Calu3 (cell line): ENCODE measurements at regions of chr1 and their contacts with region 1.

Region 1: GRCh38 chr1:93615582-93616150 is 66.0 kb downstream of the BCAR3 start:
- DNase-seq: peak; percentile 54
- H3K4me3 Mint-ChIP-seq: no peak overlapping the region
- H3K27ac Mint-ChIP-seq: peak overlapping the region; percentile 99
- H3K4me1 Mint-ChIP-seq: peaks cover 80% of the 10 kb centered on the region
- H3K27me3 Mint-ChIP-seq: no peaks in the 10 kb centered on the region
- CTCF ChIP-seq: no peak

Region 2: DNA sequence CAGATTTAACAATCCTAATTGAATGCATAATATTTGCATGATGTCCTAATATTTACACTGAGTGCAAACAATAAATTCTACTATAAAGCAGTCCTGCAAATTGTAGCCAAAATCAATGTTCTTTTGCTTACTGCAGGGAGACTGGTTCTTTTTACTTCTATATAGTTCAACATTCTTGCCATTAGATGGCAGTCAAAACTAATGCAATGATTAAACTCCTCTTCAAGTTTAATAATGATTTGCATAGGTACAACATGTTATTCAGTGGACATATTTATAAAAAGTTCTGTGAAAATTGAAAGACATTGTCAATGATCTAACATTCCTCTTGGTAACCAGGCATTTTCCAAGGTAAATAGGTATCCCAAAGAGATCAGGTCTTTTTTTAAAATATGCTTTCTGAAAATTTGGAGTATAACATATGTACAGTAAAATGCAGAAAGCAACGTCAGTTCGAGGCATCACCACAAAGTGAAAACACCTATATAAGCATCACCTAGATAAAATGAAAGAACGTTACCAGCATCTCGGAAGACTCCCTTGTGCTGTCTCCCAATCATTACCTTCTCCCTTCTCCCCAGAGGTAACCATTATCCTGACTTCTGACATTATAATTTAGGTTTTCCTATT is 177.6 kb before region 1 on chr1:
- CTCF ChIA-PET with region 1: no interaction called
- intact Hi-C with region 1: loop called (anchors 2 kb)
- DNase-seq: no peak
- H3K4me3 Mint-ChIP-seq: no peak overlapping the region
- H3K27ac Mint-ChIP-seq: no peak overlapping the region
- H3K4me1 Mint-ChIP-seq: peaks cover 14% of the 10 kb centered on the region
- H3K27me3 Mint-ChIP-seq: no peaks in the 10 kb centered on the region
- CTCF ChIP-seq: peak; percentile 43

Region 3: GRCh38 chr1:93552741-93553455 is 62.8 kb before region 1 on chr1:
- CTCF ChIA-PET with region 1: interaction called, 3 read pairs
- intact Hi-C with region 1: loop called (anchors 1 kb)
- DNase-seq: peak; percentile 36
- H3K4me3 Mint-ChIP-seq: peak overlapping the region; percentile 42
- H3K27ac Mint-ChIP-seq: peak overlapping the region; percentile 68
- H3K4me1 Mint-ChIP-seq: peaks cover 58% of the 10 kb centered on the region
- H3K27me3 Mint-ChIP-seq: no peaks in the 10 kb centered on the region
- CTCF ChIP-seq: no peak

Region 4: DNA sequence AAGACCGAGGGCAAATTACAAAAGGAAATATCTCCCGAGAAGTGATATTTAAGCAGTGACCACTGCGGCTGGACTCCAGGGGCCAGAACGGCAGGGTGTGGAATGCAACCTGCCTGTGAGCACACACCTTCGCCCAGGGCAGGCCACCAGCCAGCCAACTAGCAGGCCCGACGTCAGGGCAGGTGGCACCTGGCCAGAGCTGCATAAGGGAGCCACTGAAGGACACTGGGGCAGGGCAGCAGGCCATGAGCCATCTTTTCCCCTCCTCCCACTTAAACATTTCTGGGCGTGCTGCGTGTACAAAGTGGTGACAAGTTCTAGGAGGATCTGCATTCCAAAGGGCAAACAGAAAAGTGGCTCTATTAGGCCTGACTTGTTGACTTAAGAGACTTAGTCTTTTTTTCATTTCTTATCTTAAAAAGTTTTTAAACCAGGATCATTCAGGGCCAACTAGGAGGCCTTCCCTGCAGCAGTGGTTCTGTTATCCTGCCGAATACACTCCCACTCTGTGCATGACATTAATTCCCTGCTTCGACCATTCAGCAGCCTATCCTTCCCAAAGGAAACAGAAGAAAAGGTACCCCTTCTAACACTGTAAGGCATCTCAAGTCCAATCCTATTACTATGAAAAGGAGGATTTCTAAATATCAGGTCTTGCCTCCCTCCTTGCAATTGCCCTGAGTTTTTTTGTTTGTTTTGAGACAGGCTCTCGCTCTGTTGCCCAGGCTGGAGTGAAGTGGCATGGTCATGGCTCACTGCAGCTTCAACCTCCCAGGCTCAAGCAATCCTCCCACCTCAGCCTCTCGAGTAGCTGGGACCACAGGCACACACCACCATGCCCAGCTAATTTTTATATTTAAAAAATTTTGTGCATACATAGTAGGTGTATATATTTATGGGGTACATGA is 30.4 kb before region 1 on chr1:
- CTCF ChIA-PET with region 1: interaction called, 6 read pairs
- intact Hi-C with region 1: loop called (anchors 1 kb)
- DNase-seq: peak; percentile 98
- H3K4me3 Mint-ChIP-seq: peak overlapping the region; percentile 70
- H3K27ac Mint-ChIP-seq: peak overlapping the region; percentile 90
- H3K4me1 Mint-ChIP-seq: peaks cover 64% of the 10 kb centered on the region
- H3K27me3 Mint-ChIP-seq: no peaks in the 10 kb centered on the region
- CTCF ChIP-seq: no peak

Region 5: GRCh38 chr1:93591676-93592550 is 23.8 kb before region 1 on chr1:
- CTCF ChIA-PET with region 1: interaction called, 16 read pairs
- intact Hi-C with region 1: loop called (anchors 1 kb)
- DNase-seq: peak; percentile 93
- H3K4me3 Mint-ChIP-seq: peak overlapping the region; percentile 70
- H3K27ac Mint-ChIP-seq: peak overlapping the region; percentile 96
- H3K4me1 Mint-ChIP-seq: peaks cover 80% of the 10 kb centered on the region
- H3K27me3 Mint-ChIP-seq: no peaks in the 10 kb centered on the region
- CTCF ChIP-seq: no peak

Region 6: DNA sequence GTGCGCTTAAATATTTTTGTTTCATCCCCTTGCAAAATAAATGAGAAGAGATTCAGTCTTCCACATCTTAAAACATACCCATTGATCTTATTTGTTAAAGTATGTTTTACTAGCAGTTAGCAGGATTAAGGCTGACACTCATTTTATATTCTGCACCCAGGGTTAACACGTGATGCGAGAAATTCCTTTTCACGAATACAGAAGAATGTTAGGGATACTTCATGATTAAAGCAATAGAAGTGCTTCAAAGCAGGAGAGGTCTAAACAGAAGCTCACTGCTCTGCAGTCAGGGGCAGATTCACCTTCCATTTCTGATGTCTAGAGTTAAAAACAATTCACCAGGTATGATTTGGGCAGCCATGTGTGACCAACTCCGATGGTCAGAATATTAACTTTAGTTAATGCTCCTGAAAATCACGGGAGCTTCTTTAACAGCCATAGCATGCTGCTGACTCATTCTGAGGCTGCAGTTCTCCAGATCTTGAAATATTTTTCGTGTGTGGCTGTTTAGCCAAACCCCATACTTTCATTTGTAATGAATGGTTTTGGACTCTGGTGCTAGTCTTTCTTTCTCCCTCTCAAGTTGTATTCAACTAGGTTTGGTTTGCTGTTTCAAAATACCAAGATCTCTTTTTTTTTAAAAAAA is 46.3 kb after region 1 on chr1:
- CTCF ChIA-PET with region 1: no interaction called
- intact Hi-C with region 1: loop called (anchors 1 kb)
- DNase-seq: peak; percentile 12
- H3K4me3 Mint-ChIP-seq: peak overlapping the region; percentile 53
- H3K27ac Mint-ChIP-seq: peak overlapping the region; percentile 95
- H3K4me1 Mint-ChIP-seq: peaks cover 44% of the 10 kb centered on the region
- H3K27me3 Mint-ChIP-seq: no peaks in the 10 kb centered on the region
- CTCF ChIP-seq: no peak

Region 7: GRCh38 chr1:93814059-93814794 is 198.6 kb after region 1 on chr1:
- CTCF ChIA-PET with region 1: interaction called, 15 read pairs
- intact Hi-C with region 1: no loop called
- DNase-seq: peak; percentile 68
- H3K4me3 Mint-ChIP-seq: no peak overlapping the region
- H3K27ac Mint-ChIP-seq: no peak overlapping the region
- H3K4me1 Mint-ChIP-seq: peaks cover 11% of the 10 kb centered on the region
- H3K27me3 Mint-ChIP-seq: no peaks in the 10 kb centered on the region
- CTCF ChIP-seq: peak; percentile 90